ENCODE measurements at regions of chr7 and their contacts with region 1.

Region 1: DNA sequence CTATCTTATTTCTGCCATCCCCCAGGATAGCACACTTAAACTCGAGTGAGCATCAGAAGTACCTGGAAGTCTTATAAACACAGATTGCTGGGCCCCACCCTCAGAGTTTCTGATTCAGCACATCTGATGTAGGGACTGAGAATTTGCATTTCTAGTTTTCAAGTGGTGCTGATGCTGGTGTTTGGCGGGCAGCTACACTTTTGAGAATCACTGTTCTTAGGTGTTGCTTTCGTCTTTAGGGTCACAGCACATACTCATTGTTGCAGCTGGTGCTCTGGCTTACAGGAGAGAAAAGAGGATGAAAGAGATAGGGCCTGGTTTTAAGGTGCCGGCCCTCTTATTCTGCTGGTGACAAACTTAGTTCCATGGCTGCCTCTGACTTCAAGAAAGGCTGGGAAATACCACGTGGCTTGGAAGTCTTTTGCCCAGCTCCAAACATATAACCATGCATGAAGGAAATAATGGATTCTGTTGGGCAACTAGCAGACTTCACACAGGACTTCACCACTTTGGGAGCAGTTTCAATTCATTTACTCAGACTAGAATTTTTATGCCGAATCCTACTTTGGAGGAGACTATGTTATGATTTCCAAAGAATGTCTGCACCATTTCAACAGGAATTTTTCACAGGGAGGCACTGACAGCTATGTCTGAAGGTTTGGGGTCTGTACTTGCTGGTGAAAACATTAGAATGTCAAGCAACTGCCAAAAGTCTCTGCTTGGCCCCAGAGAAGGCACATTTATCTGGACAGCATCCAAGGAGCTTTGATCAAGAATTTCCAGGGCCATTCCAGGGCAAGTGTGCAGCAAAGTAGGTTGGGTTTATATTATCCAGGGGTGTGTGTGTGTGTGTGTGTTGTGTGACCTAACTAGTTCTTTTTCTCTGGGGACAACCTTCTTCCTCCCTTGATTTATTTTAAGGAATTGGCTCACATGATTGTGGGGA is 6.9 kb upstream of the MINDY4 start:
- DNase-seq: peak in 1 of 2 donors; percentile 86
- H3K4me3 ChIP-seq: no peak overlapping the region
- H3K27ac ChIP-seq: peak overlapping the region; percentile 61 to 74
- H3K4me1 ChIP-seq: peaks cover 8 to 87% (median 62%) of the 10 kb centered on the region in 4 donors
- H3K27me3 ChIP-seq: no peaks in the 10 kb centered on the region
- CTCF ChIP-seq: no peak

Region 2: GRCh38 chr7:30201161-30201666 is 563.1 kb before region 1 on chr7:
- intact Hi-C with region 1: no loop called
- DNase-seq: no peak
- H3K4me3 ChIP-seq: no peak overlapping the region
- H3K27ac ChIP-seq: no peak overlapping the region
- H3K4me1 ChIP-seq: peaks cover 0 to 5% (median 2%) of the 10 kb centered on the region in 4 donors
- H3K27me3 ChIP-seq: no peaks in the 10 kb centered on the region
- CTCF ChIP-seq: no peak

Region 3: GRCh38 chr7:30789334-30789711 is 25.0 kb after region 1 on chr7:
- intact Hi-C with region 1: no loop called
- DNase-seq: peak; percentile 72 to 81
- H3K4me3 ChIP-seq: no peak overlapping the region
- H3K27ac ChIP-seq: peak overlapping the region; percentile 63 to 79
- H3K4me1 ChIP-seq: peaks cover 0 to 24% (median 10%) of the 10 kb centered on the region in 4 donors
- H3K27me3 ChIP-seq: no peaks in the 10 kb centered on the region
- CTCF ChIP-seq: no peak

Region 4: GRCh38 chr7:30851651-30852307 is 87.5 kb after region 1 on chr7:
- intact Hi-C with region 1: loop called (anchors 10 kb)
- DNase-seq: peak; percentile 78 to 89
- H3K4me3 ChIP-seq: peak overlapping the region; percentile 7 to 42
- H3K27ac ChIP-seq: peak overlapping the region; percentile 93 to 97
- H3K4me1 ChIP-seq: peaks cover 0 to 82% (median 57%) of the 10 kb centered on the region in 4 donors
- H3K27me3 ChIP-seq: no peaks in the 10 kb centered on the region
- CTCF ChIP-seq: no peak